Right cardiac atrium (tissue), 5 donors: ENCODE measurements at regions of chr6 and their contacts with region 1.

Region 1: GRCh38 chr6:68975064-68975463 is 340.0 kb downstream of the ADGRB3 start:
- DNase-seq: peak in 1 of 3 donors; percentile 58
- ATAC-seq: peak; percentile 66 to 91
- H3K4me3 ChIP-seq: no peak overlapping the region
- H3K27ac ChIP-seq: no peak overlapping the region
- H3K4me1 ChIP-seq: no peaks in the 10 kb centered on the region
- H3K27me3 ChIP-seq: no peaks in the 10 kb centered on the region

Region 2: DNA sequence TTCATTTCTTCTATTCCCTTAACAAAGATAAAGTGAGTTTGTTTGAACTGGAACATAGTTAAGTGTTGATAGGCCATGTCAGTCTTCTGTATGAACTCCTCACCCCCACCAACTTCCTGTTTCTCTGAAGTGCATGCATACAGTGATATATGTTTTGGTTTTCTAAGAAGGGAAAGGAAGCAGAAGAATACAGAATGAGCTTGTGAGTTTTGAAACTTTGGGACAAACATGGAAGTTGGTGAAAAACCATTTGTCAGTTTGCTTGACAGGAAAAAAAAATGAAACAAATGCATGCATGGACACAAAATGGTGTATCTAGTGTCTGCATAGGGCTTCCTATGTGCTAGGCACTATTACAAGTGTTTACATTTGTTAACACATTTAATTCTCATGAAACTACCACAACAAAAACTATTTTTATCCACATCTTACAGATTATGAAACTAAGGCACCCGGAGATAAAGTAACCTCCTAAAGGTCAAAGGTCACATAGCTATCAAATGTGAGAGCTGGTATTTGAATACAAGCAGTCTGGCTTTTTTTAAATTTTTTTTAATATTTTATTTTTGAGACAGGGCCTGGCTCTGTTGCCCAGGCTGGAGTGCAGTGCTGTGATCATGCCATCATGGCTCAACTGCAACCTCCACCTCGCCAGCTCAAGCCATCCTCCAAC is 234.1 kb before region 1 on chr6:
- intact Hi-C with region 1: no loop called
- DNase-seq: no peak
- ATAC-seq: no peak
- H3K4me3 ChIP-seq: no peak overlapping the region
- H3K27ac ChIP-seq: no peak overlapping the region
- H3K4me1 ChIP-seq: no peaks in the 10 kb centered on the region
- H3K27me3 ChIP-seq: no peaks in the 10 kb centered on the region

Region 3: GRCh38 chr6:69044534-69044933 is 69.5 kb after region 1 on chr6:
- intact Hi-C with region 1: no loop called
- DNase-seq: no peak
- ATAC-seq: no peak
- H3K4me3 ChIP-seq: no peak overlapping the region
- H3K27ac ChIP-seq: no peak overlapping the region
- H3K4me1 ChIP-seq: no peaks in the 10 kb centered on the region
- H3K27me3 ChIP-seq: no peaks in the 10 kb centered on the region

Region 4: GRCh38 chr6:69069881-69070280 is 94.8 kb after region 1 on chr6:
- intact Hi-C with region 1: no loop called
- DNase-seq: no peak
- ATAC-seq: no peak
- H3K4me3 ChIP-seq: no peak overlapping the region
- H3K27ac ChIP-seq: no peak overlapping the region
- H3K4me1 ChIP-seq: no peaks in the 10 kb centered on the region
- H3K27me3 ChIP-seq: no peaks in the 10 kb centered on the region

Region 5: DNA sequence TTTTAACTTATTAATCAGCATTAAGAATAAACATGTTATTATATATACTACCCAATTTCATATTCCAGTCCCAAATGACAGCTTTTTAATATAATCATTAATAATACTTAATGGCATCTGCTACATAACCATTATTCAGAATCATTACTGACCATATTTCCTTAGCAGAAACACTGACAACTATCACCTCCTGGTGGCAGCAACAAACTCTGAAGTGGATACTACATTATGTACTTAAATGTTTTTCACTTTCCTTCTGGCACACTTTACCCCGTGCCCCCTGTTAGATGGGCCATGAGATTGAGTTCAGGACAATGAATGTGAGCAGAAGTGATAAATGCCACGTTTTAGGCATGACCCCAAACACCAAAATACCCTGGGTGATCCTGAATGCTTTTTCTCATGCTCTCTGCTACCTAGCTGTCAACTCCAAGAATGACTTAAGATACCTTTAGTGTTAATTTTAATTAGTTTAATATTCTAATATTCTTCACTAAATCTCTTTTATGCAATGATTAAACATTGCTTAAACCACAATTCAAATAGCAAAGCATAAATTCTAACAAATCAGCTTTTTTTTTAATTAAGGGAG is 744.6 kb after region 1 on chr6:
- intact Hi-C with region 1: loop called in 1 of 4 experiments (anchors 10 kb)
- DNase-seq: no peak
- ATAC-seq: no peak
- H3K4me3 ChIP-seq: no peak overlapping the region
- H3K27ac ChIP-seq: no peak overlapping the region
- H3K4me1 ChIP-seq: no peaks in the 10 kb centered on the region
- H3K27me3 ChIP-seq: no peaks in the 10 kb centered on the region